ENCODE measurements at regions of chr22 and their contacts with region 1.

Region 1: DNA sequence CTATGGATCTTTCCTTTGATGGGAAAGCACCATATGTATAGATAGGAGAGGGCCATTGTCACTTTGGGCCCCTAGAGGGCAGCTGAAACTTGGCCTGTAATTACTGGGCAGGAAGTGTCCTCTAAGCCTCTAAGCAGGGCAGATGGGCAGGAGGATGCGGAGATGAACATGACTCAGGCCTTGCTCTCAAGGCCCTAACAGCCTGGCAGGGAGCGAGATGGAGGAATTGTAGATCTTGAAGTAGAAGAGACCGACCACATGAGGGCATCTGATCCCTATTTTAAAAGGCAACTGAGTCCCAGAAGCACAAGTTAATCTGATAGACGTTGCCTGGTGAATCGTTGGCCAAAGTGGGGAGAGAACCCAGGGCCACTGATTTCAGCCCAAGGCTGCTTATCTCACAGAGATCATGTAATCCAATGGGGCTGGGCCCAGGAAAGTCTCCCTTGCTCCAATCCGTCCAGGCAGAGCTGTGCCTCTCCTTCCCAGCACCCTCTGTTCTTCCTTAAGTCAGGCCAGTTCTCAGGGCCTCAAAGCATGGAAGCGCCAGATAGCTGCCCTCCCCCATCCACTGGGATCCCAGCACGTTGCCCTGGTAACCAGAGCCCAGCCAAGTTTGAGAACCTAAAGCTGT is 2.5 kb upstream of the SEPTIN3 start:
- DNase-seq: peak; percentile 48
- ATAC-seq: peak; percentile 83
- H3K4me3 ChIP-seq: no peak overlapping the region
- H3K27ac ChIP-seq: no peak overlapping the region
- H3K4me1 ChIP-seq: no peaks in the 10 kb centered on the region
- H3K27me3 ChIP-seq: no peaks in the 10 kb centered on the region
- CTCF ChIP-seq: no peak; the same call in 1 of the 2 replicates

Region 2: DNA sequence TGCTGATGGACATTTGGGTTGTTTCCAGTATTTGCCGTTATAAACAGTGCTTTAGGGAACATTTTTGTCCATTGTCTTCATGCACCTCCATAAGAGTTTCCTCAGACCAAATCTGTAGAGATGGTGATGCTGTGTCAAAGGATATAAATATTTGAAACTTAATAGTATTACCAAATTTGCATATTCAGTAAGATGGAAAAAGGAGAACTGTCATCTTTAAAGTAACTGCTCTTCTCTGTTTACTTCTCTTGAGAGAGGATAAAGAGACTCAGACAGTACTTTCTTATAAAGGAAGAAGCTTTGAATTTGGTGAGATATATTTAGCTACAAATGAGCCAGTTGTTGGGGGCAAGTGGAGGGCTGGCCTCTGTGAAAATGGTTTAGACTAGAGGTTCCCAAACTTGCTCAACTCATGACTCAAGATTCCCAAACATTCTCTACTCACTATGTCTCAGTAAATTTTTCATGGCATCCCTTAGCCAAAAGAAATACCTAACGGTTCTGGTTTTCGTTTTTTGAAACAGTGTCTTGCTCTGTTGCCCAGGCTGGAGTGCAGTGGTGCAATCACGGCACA is 78.0 kb before region 1 on chr22:
- CTCF ChIA-PET with region 1: no interaction called
- POLR2A ChIA-PET with region 1: no interaction called
- in situ Hi-C with region 1: no loop called
- intact Hi-C with region 1: no loop called
- DNase-seq: no peak
- ATAC-seq: no peak
- H3K4me3 ChIP-seq: no peak overlapping the region
- H3K27ac ChIP-seq: no peak overlapping the region
- H3K4me1 ChIP-seq: no peaks in the 10 kb centered on the region
- H3K27me3 ChIP-seq: no peaks in the 10 kb centered on the region
- CTCF ChIP-seq: no peak

Region 3: GRCh38 chr22:41919357-41920224 is 47.1 kb before region 1 on chr22:
- CTCF ChIA-PET with region 1: no interaction called
- POLR2A ChIA-PET with region 1: no interaction called
- in situ Hi-C with region 1: no loop called
- intact Hi-C with region 1: no loop called
- DNase-seq: no peak
- ATAC-seq: peak; percentile 75
- H3K4me3 ChIP-seq: peak overlapping the region; percentile 37 to 53
- H3K27ac ChIP-seq: no peak overlapping the region
- H3K4me1 ChIP-seq: no peaks in the 10 kb centered on the region; the same call in 1 of the 2 replicates
- H3K27me3 ChIP-seq: no peaks in the 10 kb centered on the region
- CTCF ChIP-seq: no peak

Region 4: DNA sequence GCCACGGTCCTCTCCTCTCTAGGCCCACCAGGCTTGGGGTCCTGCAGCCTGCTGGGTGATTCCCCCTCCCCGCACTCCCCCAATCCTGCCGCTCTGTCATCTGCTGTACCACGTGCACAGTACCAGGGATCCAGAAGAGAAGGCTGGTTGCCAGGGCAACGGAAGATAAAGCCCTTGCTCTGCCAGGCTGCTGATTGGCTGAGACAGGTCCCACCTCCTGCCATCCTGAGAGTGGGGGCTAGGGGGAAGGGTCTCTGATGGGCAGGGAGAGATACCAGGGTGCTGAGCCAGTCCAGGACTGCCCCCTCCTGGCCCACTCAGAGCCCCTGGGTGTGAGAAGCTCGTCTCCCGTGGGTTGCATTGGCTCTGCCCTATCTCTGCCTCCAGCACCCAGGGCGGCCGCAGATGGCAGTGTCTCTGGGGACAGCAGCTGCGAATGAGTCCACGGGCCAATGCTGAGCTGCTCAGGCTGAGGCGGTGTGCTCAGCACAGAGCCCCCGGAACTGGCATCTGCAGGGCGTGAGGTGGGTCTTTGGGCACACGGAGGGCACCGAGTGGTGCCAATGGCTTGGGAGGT is 14.7 kb before region 1 on chr22 and contains the start of gene SMIM45:
- CTCF ChIA-PET with region 1: no interaction called
- POLR2A ChIA-PET with region 1: no interaction called
- in situ Hi-C with region 1: no loop called
- intact Hi-C with region 1: no loop called
- DNase-seq: no peak
- ATAC-seq: no peak
- H3K4me3 ChIP-seq: no peak within 1 kb of the TSS
- H3K27ac ChIP-seq: no peak within 1 kb of the TSS
- H3K4me1 ChIP-seq: peaks cover 6% of the 10 kb centered on the region
- H3K27me3 ChIP-seq: no peaks in the 10 kb centered on the region
- CTCF ChIP-seq: no peak

Region 5: DNA sequence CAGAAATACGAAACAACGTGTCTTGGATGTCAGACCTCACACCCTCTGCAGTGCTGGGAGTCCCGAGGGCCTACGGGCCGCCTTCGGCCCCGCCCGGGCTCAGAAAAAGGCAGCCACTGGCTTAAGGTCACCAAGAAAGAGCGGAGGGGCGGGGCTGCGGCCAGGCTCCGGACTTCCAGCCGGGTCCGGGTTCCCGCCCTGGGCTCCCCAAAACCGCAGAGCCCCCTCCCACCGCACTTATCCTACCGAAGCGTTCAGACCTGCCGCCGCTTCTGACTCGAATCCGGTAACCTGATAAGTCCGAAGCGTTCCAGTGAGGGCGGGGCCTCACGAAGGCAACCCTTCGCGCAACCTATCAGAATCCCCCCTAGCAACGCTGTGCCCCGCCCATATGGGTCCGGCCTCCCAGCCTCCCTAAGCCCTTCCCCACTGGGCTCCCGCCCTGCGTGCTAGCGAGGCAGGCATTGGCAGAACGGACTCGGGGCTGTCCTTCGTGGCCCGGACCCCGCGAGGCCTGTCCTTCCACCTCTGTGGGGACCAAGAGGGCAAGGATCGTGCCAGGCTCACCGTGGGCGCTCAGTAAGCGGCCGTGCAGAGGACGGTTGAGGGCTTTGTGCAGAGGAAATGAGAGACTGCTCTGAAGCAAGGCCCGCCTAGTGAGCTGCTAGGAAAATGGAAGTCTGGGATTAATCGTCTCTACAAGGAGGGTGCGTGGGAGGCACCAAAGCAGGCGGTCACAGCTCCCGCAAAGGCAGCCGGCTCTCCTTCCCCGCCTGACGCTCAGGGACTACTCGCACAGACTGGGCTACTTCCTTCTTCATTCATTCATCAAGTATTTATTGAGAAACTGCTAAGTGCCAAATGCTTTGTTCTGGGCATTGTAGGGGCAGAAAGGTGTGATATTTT is 104.0 kb after region 1 on chr22 and contains the start of gene NAGA:
- CTCF ChIA-PET with region 1: interaction called, 3 read pairs
- POLR2A ChIA-PET with region 1: no interaction called
- in situ Hi-C with region 1: no loop called
- intact Hi-C with region 1: loop called (anchors 5 kb)
- DNase-seq: no peak
- ATAC-seq: peak; percentile 98
- H3K4me3 ChIP-seq: peak within 1 kb of the TSS; percentile 59 to 78
- H3K27ac ChIP-seq: peak within 1 kb of the TSS; percentile 77
- H3K4me1 ChIP-seq: no peaks in the 10 kb centered on the region
- H3K27me3 ChIP-seq: no peaks in the 10 kb centered on the region
- CTCF ChIP-seq: no peak
- total RNA-seq, gene NAGA: 24.2 TPM

Region 6: DNA sequence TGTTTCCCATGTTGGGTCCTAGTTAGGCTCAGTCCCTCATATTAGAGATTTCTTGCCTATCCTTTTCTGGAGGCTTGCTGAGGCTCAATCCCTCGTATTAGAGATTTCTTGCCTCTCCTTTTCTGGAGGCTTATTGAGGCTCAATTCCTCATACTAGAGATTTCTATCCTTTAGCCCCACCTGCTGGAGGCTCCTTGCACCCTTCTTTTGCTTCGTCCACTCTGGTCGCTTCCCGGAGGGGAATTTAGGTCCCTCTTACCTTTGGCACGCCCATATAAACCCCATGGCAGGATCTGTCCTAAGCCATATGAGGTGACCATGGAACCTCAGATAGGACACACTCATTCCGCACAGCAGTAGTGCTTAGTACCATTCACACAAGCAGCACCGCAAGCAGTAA is 148.0 kb after region 1 on chr22:
- CTCF ChIA-PET with region 1: no interaction called
- POLR2A ChIA-PET with region 1: no interaction called
- in situ Hi-C with region 1: no loop called
- intact Hi-C with region 1: loop called (anchors 10 kb)
- DNase-seq: no peak
- ATAC-seq: 0 out of 2 replicates have a peak, but pooled peaks have one; percentile 58
- H3K4me3 ChIP-seq: no peak overlapping the region
- H3K27ac ChIP-seq: no peak overlapping the region
- H3K4me1 ChIP-seq: no peaks in the 10 kb centered on the region
- H3K27me3 ChIP-seq: no peaks in the 10 kb centered on the region
- CTCF ChIP-seq: peak; percentile 17